Caco-2 (cell line): ENCODE measurements at regions of chr4 and their contacts with region 1.

Region 1: DNA sequence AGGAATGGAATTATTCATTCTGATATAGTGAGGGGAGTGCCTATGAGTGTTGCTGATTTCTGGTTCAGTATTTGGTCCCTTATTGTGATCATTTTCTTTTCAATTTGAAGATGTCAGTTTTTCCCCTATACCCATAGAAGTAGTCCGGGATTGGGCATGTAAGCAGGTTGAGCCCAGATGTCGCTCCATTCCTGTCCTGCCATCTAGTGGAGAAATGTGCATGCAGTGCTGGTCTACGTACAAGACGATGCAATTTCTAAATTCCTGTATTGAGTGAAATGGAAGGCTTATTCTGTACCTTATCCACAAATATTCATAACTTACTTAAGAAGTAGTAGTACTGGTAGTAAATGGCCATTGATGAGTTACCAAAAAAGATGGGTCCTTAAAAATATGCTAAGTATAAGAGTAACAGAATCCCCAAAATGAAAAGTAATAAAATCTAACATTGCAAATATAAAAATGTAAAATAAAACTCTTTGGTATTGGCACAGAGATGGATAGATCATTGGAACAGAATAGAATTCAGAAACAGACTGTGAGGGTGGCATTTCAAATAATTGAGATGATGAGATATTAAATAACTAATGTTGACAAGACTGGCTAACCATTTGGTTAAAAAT is 60.9 kb downstream of the UGT8 start:
- DNase-seq: peak; percentile 71 to 75
- H3K4me3 ChIP-seq: no peak overlapping the region
- H3K4me3 Mint-ChIP-seq: no peak overlapping the region
- H3K27ac Mint-ChIP-seq: no peak overlapping the region
- H3K4me1 ChIP-seq: peaks cover 7% of the 10 kb centered on the region; the same call in 1 of the 2 replicates
- H3K4me1 Mint-ChIP-seq: no peaks in the 10 kb centered on the region
- H3K27me3 ChIP-seq: no peaks in the 10 kb centered on the region
- H3K27me3 Mint-ChIP-seq: no peaks in the 10 kb centered on the region
- CTCF ChIP-seq: peak; percentile 70 to 84

Region 2: DNA sequence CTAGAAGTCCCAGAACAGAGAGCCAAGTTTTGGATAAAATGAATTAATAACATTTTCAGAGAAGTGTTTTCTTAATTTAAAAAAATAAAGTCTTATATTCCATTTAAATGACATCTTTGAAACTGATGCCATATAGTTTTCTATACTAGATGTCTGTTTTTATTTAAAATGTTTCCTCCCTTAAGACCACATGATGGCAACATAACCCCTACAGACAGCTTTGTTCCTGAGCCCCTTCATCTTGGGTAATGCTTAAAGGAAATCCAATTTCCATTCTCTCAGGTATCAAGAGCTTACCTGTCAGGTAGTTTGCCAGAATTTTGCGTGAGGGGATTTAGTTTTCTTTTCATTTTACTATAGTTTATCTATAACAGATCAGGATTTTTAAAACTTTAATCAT is 242.3 kb before region 1 on chr4:
- CTCF ChIA-PET with region 1: interaction called, 7 read pairs
- POLR2A ChIA-PET with region 1: no interaction called
- intact Hi-C with region 1: loop called (anchors 1 kb)
- DNase-seq: peak in 1 of 2 experiments; percentile 10
- H3K4me3 ChIP-seq: no peak overlapping the region
- H3K4me3 Mint-ChIP-seq: no peak overlapping the region
- H3K27ac Mint-ChIP-seq: no peak overlapping the region
- H3K4me1 ChIP-seq: peaks cover 7% of the 10 kb centered on the region; the same call in 1 of the 2 replicates
- H3K4me1 Mint-ChIP-seq: no peaks in the 10 kb centered on the region
- H3K27me3 ChIP-seq: no peaks in the 10 kb centered on the region
- H3K27me3 Mint-ChIP-seq: no peaks in the 10 kb centered on the region
- CTCF ChIP-seq: peak in 1 of 2 experiments; percentile 25

Region 3: DNA sequence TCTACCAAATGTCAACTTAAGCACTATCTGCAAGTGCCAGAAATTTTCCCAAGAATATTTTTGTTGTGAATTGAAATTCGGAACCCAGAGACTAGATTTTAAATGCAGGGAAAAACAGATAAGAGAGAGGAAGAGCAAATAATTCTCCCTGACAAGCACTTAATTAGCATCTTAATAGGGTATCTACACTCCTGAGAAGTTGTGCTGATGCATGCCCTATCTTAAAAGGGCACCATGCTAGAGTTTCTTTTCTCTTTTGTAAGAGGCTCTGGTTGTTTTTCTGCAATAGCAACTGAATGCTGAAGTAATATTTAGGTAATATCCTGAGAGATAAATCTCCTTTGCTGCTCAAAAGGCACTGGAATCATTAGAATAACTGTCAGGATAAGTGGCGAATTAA is 200.8 kb before region 1 on chr4:
- CTCF ChIA-PET with region 1: no interaction called
- POLR2A ChIA-PET with region 1: no interaction called
- intact Hi-C with region 1: loop called (anchors 1 kb)
- DNase-seq: no peak
- H3K4me3 ChIP-seq: no peak overlapping the region
- H3K4me3 Mint-ChIP-seq: no peak overlapping the region
- H3K27ac Mint-ChIP-seq: no peak overlapping the region
- H3K4me1 ChIP-seq: no peaks in the 10 kb centered on the region
- H3K4me1 Mint-ChIP-seq: no peaks in the 10 kb centered on the region
- H3K27me3 ChIP-seq: no peaks in the 10 kb centered on the region
- H3K27me3 Mint-ChIP-seq: no peaks in the 10 kb centered on the region
- CTCF ChIP-seq: no peak

Region 4: DNA sequence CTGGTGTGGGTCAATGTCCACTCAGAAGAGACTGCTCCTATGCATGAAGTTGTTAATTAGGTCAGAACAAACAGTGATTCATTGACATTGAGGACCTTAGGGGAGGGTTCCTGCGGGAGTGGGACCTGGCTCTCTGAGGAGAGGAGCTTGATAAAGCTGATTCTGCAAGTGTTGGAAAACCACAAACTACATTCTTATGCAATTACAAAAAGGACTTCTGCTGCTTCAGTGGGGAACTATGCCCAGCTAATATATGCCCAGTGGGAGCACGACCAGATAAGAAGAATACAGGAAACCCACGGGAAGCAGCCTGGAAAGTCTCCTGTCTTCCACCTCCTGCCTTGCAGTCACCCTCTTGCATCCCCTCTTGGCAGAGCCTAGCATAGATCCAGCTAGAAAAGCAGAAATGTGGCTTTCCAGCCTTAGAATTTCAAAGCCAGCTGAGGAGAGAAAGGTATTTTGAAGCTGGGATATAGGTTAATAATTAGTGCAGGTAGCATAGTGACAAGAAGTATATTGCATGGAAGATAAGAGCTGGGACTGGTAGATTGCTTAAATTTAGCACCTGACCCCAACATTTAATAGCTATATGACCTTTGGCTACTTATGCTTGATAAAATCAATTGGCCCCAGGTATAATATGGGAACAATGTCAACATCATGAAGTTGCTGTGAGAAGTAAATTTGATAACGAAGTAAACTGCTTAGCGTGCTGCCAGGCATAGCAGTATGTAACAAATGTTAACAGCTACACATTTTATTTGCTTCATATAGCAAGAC is 95.8 kb before region 1 on chr4:
- CTCF ChIA-PET with region 1: interaction called, 5 read pairs
- POLR2A ChIA-PET with region 1: no interaction called
- intact Hi-C with region 1: loop called (anchors 1 kb)
- DNase-seq: peak; percentile 65 to 84
- H3K4me3 ChIP-seq: no peak overlapping the region; the same call in 1 of the 2 replicates
- H3K4me3 Mint-ChIP-seq: peak overlapping the region; percentile 52
- H3K27ac Mint-ChIP-seq: peak overlapping the region; percentile 76
- H3K4me1 ChIP-seq: peaks cover 38% of the 10 kb centered on the region
- H3K4me1 Mint-ChIP-seq: peaks cover 15% of the 10 kb centered on the region
- H3K27me3 ChIP-seq: no peaks in the 10 kb centered on the region
- H3K27me3 Mint-ChIP-seq: no peaks in the 10 kb centered on the region
- CTCF ChIP-seq: no peak

Region 5: GRCh38 chr4:114694770-114695169 is 35.3 kb after region 1 on chr4:
- CTCF ChIA-PET with region 1: interaction called, 3 read pairs
- POLR2A ChIA-PET with region 1: no interaction called
- intact Hi-C with region 1: loop called (anchors 1 kb)
- DNase-seq: peak in 1 of 2 experiments; percentile 12
- H3K4me3 ChIP-seq: no peak overlapping the region
- H3K4me3 Mint-ChIP-seq: no peak overlapping the region
- H3K27ac Mint-ChIP-seq: no peak overlapping the region
- H3K4me1 ChIP-seq: no peaks in the 10 kb centered on the region
- H3K4me1 Mint-ChIP-seq: no peaks in the 10 kb centered on the region
- H3K27me3 ChIP-seq: no peaks in the 10 kb centered on the region
- H3K27me3 Mint-ChIP-seq: peaks cover 2% of the 10 kb centered on the region
- CTCF ChIP-seq: peak; percentile 15 to 64

Region 6: GRCh38 chr4:114827651-114828050 is 168.2 kb after region 1 on chr4:
- CTCF ChIA-PET with region 1: no interaction called
- POLR2A ChIA-PET with region 1: no interaction called
- intact Hi-C with region 1: no loop called
- DNase-seq: no peak
- H3K4me3 ChIP-seq: no peak overlapping the region
- H3K4me3 Mint-ChIP-seq: no peak overlapping the region
- H3K27ac Mint-ChIP-seq: no peak overlapping the region
- H3K4me1 ChIP-seq: no peaks in the 10 kb centered on the region
- H3K4me1 Mint-ChIP-seq: no peaks in the 10 kb centered on the region
- H3K27me3 ChIP-seq: no peaks in the 10 kb centered on the region
- H3K27me3 Mint-ChIP-seq: no peaks in the 10 kb centered on the region
- CTCF ChIP-seq: no peak